ENCODE measurements at regions of chr11 and their contacts with region 1.

Region 1: DNA sequence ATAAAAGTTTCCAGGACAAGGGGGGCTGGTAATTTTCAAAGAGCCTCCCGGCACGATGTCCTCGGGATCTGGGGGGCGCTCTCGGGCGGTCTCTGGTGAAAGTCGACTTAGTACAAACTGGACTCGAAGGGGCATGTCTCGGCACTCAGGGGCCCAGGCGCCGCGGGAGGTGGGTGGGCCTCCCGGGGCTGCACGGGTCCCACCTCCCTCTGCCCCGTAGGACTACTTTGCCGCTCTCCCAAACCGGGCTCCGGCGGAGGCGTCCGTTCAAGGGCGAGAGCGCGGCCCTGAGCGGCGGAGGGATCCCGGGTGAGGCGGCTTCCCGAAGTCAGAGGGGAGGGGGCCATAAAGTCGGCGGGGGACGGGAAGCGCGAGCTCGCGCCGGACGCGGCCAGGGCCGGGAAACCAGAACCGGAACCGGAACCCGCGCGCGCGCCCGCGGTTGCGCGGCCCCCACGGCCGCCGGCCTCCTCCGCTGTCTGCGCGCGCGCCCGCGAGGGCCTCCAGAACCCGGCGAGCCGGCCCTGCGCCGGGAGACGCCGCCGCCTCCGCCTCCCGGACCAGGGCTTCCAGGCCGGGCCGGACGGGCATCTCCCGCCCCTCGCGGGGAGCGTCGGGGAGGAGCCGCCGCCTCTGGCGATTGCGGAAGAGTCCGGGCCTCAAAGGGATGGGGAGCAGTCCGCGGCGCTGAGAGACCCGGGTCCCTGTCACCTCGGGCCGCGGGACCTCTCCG is at the start of gene ARHGEF12:
- DNase-seq: peak; percentile 91
- ATAC-seq: peak; percentile 70
- H3K4me3 Mint-ChIP-seq: peak within 1 kb of the TSS; percentile 84
- H3K27ac Mint-ChIP-seq: peak within 1 kb of the TSS; percentile 55
- H3K4me1 Mint-ChIP-seq: peaks cover 29% of the 10 kb centered on the region
- H3K27me3 Mint-ChIP-seq: peaks cover 41% of the 10 kb centered on the region
- total RNA-seq, gene ARHGEF12: 14.3 to 14.5 TPM

Region 2: DNA sequence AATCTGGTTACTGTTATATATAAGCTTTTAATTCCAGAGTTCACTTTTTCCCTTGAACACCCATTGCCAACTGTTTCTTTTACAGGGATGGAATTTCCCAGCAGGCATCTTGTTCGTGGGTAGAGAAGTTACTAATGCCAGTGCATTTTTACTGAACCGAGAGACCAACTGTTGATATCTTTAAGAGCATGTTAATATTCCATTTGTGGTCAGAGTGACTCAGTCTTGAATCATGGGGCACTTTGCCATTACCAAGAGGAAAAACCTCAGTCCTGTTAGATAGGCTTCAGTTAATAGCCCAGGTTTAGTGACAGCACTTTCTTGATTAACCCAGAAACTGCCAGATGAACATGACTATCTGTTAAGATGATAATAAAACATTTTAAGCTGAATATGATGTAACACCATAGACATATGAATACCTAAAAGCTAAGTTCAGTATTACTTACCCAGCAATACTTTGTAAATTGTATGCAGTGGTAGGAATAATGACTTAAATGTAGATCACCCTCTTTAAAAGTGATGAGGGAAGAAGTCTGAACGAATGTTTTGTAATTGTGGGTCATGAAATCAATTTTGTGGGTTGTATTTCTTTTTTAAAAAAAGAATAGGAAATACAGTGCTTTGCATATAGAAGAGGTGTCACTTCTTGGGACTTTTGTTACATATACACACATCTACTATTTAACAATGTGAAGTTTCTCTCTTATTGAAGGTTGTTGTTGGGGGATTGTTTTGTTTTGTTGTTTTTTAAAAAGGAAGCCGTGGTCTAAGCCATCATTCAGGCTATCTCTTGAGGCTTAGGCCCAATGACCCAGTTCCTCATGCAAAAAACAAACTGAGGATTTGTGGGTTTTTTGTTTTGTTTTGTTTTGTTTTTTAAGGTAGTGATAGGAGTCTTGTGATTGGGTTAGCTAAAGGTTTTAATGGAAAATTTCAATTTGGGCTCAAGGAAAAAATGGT is 96.3 kb after region 1 on chr11:
- CTCF ChIA-PET with region 1: no interaction called
- POLR2A ChIA-PET with region 1: no interaction called
- intact Hi-C with region 1: loop called (anchors 5 to 10 kb)
- DNase-seq: peak; percentile 10
- ATAC-seq: peak; percentile 89
- H3K4me3 Mint-ChIP-seq: no peak overlapping the region
- H3K27ac Mint-ChIP-seq: peak overlapping the region; percentile 51
- H3K4me1 Mint-ChIP-seq: peaks cover 16% of the 10 kb centered on the region
- H3K27me3 Mint-ChIP-seq: no peaks in the 10 kb centered on the region

Region 3: DNA sequence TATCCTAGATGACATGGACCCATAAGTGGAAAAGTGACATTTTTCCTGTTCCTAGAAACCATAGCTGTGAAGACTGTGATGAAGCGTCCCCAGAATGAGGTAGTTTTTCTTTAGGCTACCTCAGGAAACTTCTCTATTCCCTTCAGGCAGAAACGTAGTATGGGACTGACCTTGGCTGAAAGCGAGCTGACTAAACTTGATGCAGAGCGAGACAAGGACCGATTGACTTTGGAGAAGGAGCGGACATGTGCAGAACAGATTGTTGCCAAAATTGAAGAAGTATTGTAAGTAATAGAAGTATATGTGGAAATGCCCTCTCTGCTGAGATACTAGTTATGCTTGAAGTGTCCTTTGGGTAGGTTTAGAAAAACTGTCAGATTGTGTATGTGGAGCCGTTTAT is 110.7 kb after region 1 on chr11:
- CTCF ChIA-PET with region 1: no interaction called
- POLR2A ChIA-PET with region 1: no interaction called
- intact Hi-C with region 1: no loop called
- DNase-seq: no peak
- ATAC-seq: no peak
- H3K4me3 Mint-ChIP-seq: no peak overlapping the region
- H3K27ac Mint-ChIP-seq: no peak overlapping the region
- H3K4me1 Mint-ChIP-seq: no peaks in the 10 kb centered on the region
- H3K27me3 Mint-ChIP-seq: no peaks in the 10 kb centered on the region

Region 4: GRCh38 chr11:120494595-120494994 is 158.5 kb after region 1 on chr11:
- CTCF ChIA-PET with region 1: interaction called, 3 read pairs
- POLR2A ChIA-PET with region 1: no interaction called
- intact Hi-C with region 1: loop called in 1 of 2 experiments (anchors 5 kb)
- DNase-seq: no peak
- ATAC-seq: no peak
- H3K4me3 Mint-ChIP-seq: no peak overlapping the region
- H3K27ac Mint-ChIP-seq: no peak overlapping the region
- H3K4me1 Mint-ChIP-seq: no peaks in the 10 kb centered on the region
- H3K27me3 Mint-ChIP-seq: peaks cover 7% of the 10 kb centered on the region

Region 5: DNA sequence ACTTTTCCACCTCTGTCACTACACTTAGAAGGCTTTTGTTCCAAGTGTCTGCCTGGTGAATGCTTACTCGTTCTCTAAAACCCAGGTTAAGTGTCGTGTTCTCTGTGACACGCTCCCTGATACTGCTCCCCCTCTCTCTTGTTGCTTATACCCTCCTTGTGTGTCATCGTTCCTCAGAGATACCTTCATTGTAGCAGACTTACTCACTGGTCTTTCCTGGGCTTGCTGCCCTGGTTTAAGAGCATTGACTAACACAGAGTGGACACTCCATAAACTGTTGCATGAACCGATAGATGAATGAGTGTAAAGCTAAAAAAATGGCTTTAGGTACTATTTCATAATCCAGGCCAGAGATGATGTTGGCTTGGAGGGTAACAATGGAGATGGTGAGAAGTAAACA is 346.8 kb after region 1 on chr11:
- CTCF ChIA-PET with region 1: interaction called, 10 read pairs
- POLR2A ChIA-PET with region 1: no interaction called
- intact Hi-C with region 1: loop called (anchors 2 to 10 kb)
- DNase-seq: no peak
- ATAC-seq: no peak
- H3K4me3 Mint-ChIP-seq: no peak overlapping the region
- H3K27ac Mint-ChIP-seq: no peak overlapping the region
- H3K4me1 Mint-ChIP-seq: no peaks in the 10 kb centered on the region
- H3K27me3 Mint-ChIP-seq: peaks cover 29% of the 10 kb centered on the region

Region 6: GRCh38 chr11:120835601-120836228 is 499.6 kb after region 1 on chr11:
- CTCF ChIA-PET with region 1: no interaction called
- POLR2A ChIA-PET with region 1: no interaction called
- intact Hi-C with region 1: loop called in 1 of 2 experiments (anchors 2 kb)
- DNase-seq: peak; percentile 80
- ATAC-seq: peak; percentile 94
- H3K4me3 Mint-ChIP-seq: no peak overlapping the region
- H3K27ac Mint-ChIP-seq: no peak overlapping the region
- H3K4me1 Mint-ChIP-seq: peaks cover 22% of the 10 kb centered on the region
- H3K27me3 Mint-ChIP-seq: peaks cover 20% of the 10 kb centered on the region

Region 7: GRCh38 chr11:120952461-120953434 is 616.7 kb after region 1 on chr11:
- CTCF ChIA-PET with region 1: no interaction called
- POLR2A ChIA-PET with region 1: no interaction called
- intact Hi-C with region 1: loop called in 1 of 2 experiments (anchors 2 kb)
- DNase-seq: peak; percentile 83
- ATAC-seq: peak; percentile 84
- H3K4me3 Mint-ChIP-seq: peak overlapping the region; percentile 11
- H3K27ac Mint-ChIP-seq: peak overlapping the region; percentile 29
- H3K4me1 Mint-ChIP-seq: peaks cover 16% of the 10 kb centered on the region
- H3K27me3 Mint-ChIP-seq: peaks cover 12% of the 10 kb centered on the region

Region 8: GRCh38 chr11:121292495-121293287 is 956.6 kb after region 1 on chr11 and contains the start of gene SC5D:
- CTCF ChIA-PET with region 1: no interaction called
- POLR2A ChIA-PET with region 1: no interaction called
- intact Hi-C with region 1: loop called in 1 of 2 experiments (anchors 5 kb)
- DNase-seq: peak; percentile 97
- ATAC-seq: peak; percentile 95
- H3K4me3 Mint-ChIP-seq: peak within 1 kb of the TSS; percentile 81
- H3K27ac Mint-ChIP-seq: peak within 1 kb of the TSS; percentile 91
- H3K4me1 Mint-ChIP-seq: peaks cover 36% of the 10 kb centered on the region
- H3K27me3 Mint-ChIP-seq: no peaks in the 10 kb centered on the region
- total RNA-seq, gene SC5D: 22.3 to 29.9 TPM

Measured in activated CD4-positive, alpha-beta T cell treated with anti-CD3 and anti-CD28 coated beads for 36 hours (primary cell).